ENCODE measurements at regions of chr5 and their contacts with region 1.

Region 1: DNA sequence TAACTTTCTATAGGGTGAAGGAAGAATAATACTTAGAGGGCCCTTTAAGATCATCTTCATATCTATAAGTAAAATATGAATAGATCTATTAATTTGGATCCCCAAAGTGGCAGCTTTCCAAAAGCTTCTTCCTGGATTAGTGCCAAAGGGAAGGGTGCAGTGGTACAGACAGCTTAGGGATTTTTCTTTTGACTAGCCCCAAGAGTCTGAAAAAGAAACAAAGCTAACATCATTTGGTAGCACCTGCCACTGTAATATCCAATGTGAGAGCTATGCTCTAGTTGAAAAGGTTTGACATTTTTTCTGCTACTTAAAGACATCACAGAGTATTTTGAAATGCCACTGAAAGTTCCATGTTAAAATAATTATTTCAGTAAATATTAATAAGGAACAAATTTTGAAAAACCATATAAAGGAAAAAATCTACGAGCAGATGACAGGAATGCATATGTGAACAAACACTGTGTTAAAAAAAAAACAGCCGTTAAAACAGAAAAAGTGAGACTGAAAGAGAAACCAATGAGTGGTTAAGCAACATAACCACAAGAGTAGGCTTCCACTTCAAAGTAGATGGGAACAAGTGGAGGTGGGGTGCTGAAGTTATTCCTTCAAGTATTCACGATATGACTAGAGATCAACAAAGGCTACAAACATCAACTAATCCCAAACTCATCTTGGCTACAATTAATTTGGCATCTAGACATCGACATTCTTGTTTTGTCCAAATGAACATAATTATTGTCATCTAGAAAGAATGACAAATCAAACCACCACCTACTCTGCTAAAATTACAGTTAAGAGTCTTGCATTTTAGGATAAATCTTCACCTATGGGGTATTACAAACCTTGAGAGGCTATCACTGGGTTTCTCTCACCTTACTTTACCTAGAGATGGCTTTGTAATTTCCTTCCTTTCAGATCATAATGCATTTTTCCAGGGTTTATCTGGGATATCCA is 137.5 kb downstream of the CPLANE1 start:
- DNase-seq: no peak
- H3K4me3 Mint-ChIP-seq: peak overlapping the region; percentile 35
- H3K27ac Mint-ChIP-seq: peak overlapping the region; percentile 28
- H3K4me1 Mint-ChIP-seq: peaks cover 26% of the 10 kb centered on the region
- H3K27me3 Mint-ChIP-seq: peaks cover 5% of the 10 kb centered on the region

Region 2: DNA sequence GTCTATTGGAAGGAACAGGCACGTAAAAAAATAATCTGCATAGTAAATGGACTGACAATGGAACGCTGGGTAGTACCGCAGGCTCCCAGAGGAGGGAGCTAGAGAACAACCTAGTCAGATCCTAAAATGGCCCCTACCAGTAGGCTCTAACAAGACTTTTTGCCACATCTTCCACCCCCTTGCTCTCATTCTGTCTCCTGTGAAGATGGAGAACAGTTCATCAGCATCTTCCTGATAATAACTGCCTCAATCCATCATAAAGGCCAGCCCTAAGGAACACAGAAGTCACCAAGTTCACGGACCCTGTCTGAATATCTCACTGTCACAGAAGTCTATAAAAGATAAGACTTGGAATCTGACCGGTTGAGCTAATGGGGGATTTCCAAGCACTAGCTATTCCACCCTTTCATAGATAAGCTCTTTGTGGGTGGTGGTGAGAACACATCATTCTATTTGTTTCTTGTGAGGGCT is 371.9 kb before region 1 on chr5:
- CTCF ChIA-PET with region 1: no interaction called
- POLR2A ChIA-PET with region 1: no interaction called
- intact Hi-C with region 1: loop called (anchors 5 kb)
- DNase-seq: peak; percentile 84
- H3K4me3 Mint-ChIP-seq: no peak overlapping the region
- H3K27ac Mint-ChIP-seq: no peak overlapping the region
- H3K4me1 Mint-ChIP-seq: peaks cover 4% of the 10 kb centered on the region
- H3K27me3 Mint-ChIP-seq: peaks cover 25% of the 10 kb centered on the region

Region 3: DNA sequence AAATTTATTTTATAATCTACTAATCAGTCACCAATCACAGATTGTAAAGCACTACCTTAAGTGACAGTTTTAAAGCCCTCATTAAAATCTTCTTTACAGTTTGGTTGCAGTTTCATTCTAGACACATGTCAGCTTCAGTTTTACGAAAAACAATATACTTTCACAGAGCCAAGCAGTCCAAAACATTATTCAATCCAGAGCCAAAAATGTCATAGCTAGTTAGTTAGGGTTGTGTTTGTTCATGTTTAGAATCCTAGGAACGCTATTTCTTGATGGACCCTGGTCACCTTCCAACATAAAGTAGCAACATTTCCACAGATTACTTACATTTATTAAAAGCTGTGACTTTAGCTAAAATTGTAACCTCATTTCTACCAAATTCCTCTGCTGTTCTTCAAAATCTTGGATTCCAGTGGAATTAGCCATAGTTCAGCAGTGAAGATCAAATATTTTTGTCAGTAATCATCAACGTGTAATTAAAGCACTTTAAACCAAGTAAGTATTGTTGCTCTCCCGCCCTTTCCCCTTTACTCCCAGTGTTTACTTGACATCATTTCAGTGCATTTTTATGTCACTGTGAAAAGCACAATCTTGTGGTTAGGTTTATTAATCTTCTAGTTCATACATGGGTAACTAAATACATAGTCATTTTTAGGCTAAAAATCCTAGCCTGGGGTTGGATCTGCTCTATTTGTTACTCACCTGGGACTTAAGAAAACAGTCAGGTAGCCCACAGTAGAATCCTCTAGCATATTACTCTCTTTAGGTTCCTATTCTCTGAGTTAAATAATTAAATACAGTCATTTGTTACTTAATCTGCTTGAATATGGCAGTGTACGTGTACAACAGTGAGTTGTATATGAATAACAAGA is 160.9 kb before region 1 on chr5:
- CTCF ChIA-PET with region 1: no interaction called
- POLR2A ChIA-PET with region 1: no interaction called
- intact Hi-C with region 1: no loop called
- DNase-seq: no peak
- H3K4me3 Mint-ChIP-seq: no peak overlapping the region
- H3K27ac Mint-ChIP-seq: no peak overlapping the region
- H3K4me1 Mint-ChIP-seq: peaks cover 31% of the 10 kb centered on the region
- H3K27me3 Mint-ChIP-seq: no peaks in the 10 kb centered on the region

Region 4: DNA sequence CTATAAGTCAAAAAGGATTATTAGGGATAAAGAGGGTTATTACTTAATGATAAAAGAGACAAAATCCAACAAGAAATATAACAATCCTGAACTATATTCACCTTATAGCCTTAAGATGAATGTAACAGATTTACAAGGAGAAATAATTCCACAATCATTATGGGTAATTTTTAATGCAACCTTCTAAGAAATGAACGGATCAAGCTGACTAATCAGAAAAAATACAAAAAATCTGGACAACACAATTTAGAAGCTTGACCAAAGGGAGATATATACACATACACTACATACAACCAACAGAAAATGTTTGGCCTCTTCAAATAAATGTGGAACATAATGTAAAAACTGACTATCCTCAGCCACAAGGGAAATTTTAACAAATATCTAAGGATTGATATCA is 35.2 kb after region 1 on chr5:
- CTCF ChIA-PET with region 1: no interaction called
- POLR2A ChIA-PET with region 1: no interaction called
- intact Hi-C with region 1: no loop called
- DNase-seq: no peak
- H3K4me3 Mint-ChIP-seq: no peak overlapping the region
- H3K27ac Mint-ChIP-seq: no peak overlapping the region
- H3K4me1 Mint-ChIP-seq: no peaks in the 10 kb centered on the region
- H3K27me3 Mint-ChIP-seq: no peaks in the 10 kb centered on the region

Region 5: GRCh38 chr5:37248970-37249686 is 137.4 kb after region 1 on chr5 and contains the start of gene CPLANE1:
- CTCF ChIA-PET with region 1: no interaction called
- POLR2A ChIA-PET with region 1: no interaction called
- intact Hi-C with region 1: loop called (anchors 5 kb)
- DNase-seq: peak; percentile 63
- H3K4me3 Mint-ChIP-seq: peak within 1 kb of the TSS; percentile 74
- H3K27ac Mint-ChIP-seq: no peak within 1 kb of the TSS
- H3K4me1 Mint-ChIP-seq: peaks cover 7% of the 10 kb centered on the region
- H3K27me3 Mint-ChIP-seq: no peaks in the 10 kb centered on the region
- total RNA-seq, gene CPLANE1: 4.4 to 5.8 TPM

Region 6: GRCh38 chr5:37448941-37449340 is 337.2 kb after region 1 on chr5:
- CTCF ChIA-PET with region 1: no interaction called
- POLR2A ChIA-PET with region 1: no interaction called
- intact Hi-C with region 1: loop called (anchors 5 kb)
- DNase-seq: no peak
- H3K4me3 Mint-ChIP-seq: no peak overlapping the region
- H3K27ac Mint-ChIP-seq: no peak overlapping the region
- H3K4me1 Mint-ChIP-seq: peaks cover 4% of the 10 kb centered on the region
- H3K27me3 Mint-ChIP-seq: no peaks in the 10 kb centered on the region

Region 7: DNA sequence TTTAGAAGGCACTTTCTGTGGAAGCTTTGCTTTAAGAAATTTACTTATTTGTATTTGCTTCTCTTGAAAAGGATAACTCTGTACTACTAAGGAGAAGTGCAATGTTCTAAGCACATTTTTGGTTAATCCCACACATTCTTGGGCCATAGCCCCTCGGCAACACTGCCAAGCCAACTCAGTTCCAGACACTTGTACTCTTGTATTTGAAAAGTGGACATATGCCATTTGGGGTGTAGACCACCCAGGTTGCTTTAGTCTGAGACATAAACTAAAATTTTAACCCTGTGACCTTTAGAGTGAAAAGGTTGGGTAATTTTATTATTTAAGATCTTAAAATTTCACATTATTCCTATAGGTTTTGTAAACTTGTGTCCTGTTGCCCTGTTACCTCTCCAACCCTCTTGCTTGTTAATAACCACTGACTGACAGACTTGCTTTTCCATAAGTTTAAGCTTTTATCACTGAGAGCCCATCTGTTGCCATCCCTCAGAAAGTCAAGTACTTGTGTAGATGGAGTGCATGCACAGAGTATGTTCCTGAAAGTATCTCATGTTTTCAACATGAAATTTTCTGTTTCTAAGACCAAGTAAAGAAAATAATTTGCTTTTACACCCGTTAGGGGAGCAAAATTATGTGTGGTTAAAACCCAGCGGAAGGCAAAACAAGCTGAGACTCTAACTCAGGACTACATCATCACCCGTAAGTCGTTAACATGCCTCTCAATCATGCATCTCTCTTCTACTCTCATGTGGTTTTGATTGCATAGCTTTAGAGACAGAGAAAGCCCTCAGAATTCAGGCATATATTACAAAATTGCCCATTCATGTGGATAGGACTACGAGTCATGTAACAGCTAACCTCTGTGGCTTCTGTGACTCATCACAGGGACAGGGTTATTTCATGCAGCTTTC is 610.8 kb after region 1 on chr5:
- CTCF ChIA-PET with region 1: no interaction called
- POLR2A ChIA-PET with region 1: no interaction called
- intact Hi-C with region 1: loop called (anchors 1 kb)
- DNase-seq: peak; percentile 62
- H3K4me3 Mint-ChIP-seq: peak overlapping the region; percentile 6
- H3K27ac Mint-ChIP-seq: peak overlapping the region; percentile 67
- H3K4me1 Mint-ChIP-seq: peaks cover 34% of the 10 kb centered on the region
- H3K27me3 Mint-ChIP-seq: peaks cover 6% of the 10 kb centered on the region

Region 8: DNA sequence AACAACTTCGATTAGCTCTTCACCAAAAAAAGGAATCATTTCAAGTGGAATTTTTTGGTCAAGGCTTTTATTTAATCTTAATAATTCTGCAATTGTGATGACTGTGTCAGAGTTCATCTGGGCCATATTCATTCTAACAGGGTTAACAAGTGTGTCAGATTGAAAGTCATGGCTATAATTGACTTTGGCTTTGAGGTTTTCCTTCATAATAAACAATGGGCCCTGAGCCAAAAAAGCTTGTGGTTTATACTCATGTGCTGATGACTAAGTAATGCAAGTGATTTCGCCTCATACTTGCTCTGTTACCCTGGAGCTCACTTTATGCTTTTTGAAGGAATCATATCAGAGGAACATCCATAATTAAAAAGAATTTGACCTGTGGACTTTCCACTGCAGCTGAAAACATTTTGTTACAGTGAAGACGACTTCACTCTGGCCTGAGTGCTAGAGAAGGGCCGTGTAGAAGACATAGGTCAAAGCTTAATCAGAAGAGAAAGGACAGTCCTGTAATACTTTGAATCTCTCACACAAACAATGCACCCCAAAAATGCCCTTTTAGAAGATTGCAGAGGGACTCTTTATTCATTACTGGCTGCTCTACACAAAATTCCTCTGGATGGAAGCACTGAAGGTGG is 626.5 kb after region 1 on chr5:
- CTCF ChIA-PET with region 1: no interaction called
- POLR2A ChIA-PET with region 1: no interaction called
- intact Hi-C with region 1: loop called (anchors 5 kb)
- DNase-seq: no peak
- H3K4me3 Mint-ChIP-seq: no peak overlapping the region
- H3K27ac Mint-ChIP-seq: no peak overlapping the region
- H3K4me1 Mint-ChIP-seq: peaks cover 24% of the 10 kb centered on the region
- H3K27me3 Mint-ChIP-seq: no peaks in the 10 kb centered on the region